GM13976 (cell line): ENCODE measurements at regions of chr18 and their contacts with region 1.

Region 1: DNA sequence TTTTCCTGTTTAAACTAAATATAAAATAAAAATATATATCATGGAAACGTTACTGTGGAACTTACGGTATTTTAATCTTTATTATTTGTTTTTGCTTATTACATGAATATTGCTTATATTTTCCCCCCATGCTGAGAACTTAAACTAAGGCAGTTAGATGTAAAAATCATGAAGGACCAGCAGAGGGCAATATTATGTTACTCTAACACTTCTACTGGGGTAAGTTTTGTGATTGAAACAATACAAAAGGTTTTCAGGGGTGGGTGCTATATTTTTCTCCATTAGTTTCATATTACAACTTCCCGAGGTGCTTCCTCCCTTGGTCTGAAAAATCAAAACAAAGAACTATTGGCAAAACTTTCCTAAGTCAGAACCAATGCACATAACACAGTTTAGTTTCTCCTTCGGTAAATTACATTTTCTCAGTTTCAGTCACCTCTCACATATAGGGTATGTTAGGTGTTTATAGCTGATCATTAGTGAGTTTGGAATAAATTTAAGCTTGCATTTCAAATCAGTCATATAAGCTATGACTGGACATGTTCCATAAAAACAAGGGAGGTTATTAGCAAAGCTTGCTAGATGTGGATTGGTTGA is 54.8 kb downstream of the ZNF407 start:
- DNase-seq: peak; percentile 43
- CTCF ChIP-seq: no peak

Region 2: DNA sequence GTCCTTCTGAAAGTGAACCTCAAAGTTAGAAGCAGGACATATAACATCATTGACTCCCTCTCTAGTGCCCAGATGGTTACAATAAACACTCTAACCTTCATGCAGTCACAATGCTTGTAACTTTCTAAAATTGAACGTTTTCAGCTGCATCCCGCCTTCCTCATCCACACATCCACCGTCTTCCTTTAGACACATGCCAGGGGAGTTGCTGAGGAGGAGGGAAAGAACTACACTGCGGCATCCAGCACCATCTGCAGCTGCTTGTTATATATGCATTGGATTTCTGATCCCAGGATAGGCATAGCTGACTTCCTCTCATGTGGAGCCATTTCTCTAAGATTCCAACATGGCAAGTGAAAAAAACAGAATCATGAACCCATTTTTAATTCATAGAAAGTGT is 601.7 kb before region 1 on chr18:
- in situ Hi-C with region 1: no loop called
- DNase-seq: no peak
- CTCF ChIP-seq: no peak

Region 3: GRCh38 chr18:74702950-74703349 is 50.5 kb after region 1 on chr18:
- in situ Hi-C with region 1: no loop called
- DNase-seq: no peak
- CTCF ChIP-seq: no peak

Region 4: GRCh38 chr18:74963820-74964446 is 311.4 kb after region 1 on chr18:
- in situ Hi-C with region 1: loop called (anchors 25 kb)
- DNase-seq: peak; percentile 33
- CTCF ChIP-seq: peak; percentile 40

Region 5: GRCh38 chr18:75478996-75479880 is 826.7 kb after region 1 on chr18:
- in situ Hi-C with region 1: loop called (anchors 25 kb)
- DNase-seq: peak; percentile 40
- CTCF ChIP-seq: peak; percentile 44